Left cardiac atrium (tissue), 4 donors: ENCODE measurements at regions of chr6 and their contacts with region 1.

Region 1: GRCh38 chr6:148947621-148948444 is 201.0 kb downstream of the UST start:
- DNase-seq: peak; percentile 83
- ATAC-seq: peak; percentile 90 to 95

Region 2: DNA sequence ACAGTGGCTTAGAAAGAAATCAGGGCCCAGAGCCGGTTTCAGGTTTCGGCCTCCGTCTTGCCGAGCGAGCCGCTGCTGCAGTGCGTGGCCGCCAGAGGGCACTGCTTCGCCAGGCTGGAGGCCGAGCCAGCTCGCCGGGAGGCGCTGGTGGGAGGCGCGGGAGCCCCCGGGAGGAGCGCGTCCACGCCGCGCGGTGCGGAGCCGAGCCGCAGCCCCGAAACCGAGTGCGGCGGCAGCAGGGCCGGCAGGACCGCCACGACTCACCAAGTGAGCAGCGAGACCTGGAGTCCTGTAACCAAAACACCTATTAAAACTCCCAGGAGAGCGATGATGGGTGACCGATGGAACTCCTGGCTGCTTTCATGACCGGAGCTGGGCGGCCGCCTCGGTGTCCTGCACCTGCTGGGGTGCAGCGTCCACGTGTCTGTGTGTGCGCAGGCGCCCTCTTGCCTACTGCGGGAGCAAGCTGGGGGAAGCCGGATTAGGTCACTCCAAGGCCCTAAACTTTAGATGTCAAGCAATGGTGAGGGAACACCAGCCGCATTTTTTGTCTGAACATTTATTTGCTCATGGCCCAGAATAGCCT is 387.9 kb before region 1 on chr6:
- intact Hi-C with region 1: loop called in 1 of 2 experiments (anchors 5 kb)
- DNase-seq: peak; percentile 80
- ATAC-seq: peak; percentile 89 to 90

Region 3: DNA sequence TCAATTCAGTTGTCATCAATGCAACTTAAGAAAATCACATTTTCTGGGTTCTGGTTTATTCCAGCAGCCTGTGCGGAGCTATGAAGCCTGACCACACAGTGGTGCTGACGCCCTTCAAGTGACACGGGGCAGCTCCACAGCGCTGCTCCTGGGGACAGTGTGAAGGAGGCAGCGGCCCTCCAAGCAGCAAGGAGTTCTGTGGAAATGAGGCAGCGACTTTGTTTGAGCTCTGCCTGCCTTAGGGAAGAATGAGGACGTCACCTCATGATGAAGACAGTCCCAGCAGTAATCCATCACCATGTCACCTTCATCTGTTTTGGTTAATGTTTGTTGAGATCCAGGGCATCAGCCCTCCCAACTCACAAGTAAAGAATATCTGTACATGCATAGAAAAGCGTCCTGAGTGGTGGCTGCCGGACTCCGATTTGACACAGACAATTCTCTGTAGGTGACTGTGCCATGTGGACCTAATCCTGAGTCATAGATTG is 369.5 kb before region 1 on chr6:
- intact Hi-C with region 1: loop called (anchors 2 to 5 kb)
- DNase-seq: peak; percentile 80
- ATAC-seq: peak; percentile 99 to 100

Region 4: DNA sequence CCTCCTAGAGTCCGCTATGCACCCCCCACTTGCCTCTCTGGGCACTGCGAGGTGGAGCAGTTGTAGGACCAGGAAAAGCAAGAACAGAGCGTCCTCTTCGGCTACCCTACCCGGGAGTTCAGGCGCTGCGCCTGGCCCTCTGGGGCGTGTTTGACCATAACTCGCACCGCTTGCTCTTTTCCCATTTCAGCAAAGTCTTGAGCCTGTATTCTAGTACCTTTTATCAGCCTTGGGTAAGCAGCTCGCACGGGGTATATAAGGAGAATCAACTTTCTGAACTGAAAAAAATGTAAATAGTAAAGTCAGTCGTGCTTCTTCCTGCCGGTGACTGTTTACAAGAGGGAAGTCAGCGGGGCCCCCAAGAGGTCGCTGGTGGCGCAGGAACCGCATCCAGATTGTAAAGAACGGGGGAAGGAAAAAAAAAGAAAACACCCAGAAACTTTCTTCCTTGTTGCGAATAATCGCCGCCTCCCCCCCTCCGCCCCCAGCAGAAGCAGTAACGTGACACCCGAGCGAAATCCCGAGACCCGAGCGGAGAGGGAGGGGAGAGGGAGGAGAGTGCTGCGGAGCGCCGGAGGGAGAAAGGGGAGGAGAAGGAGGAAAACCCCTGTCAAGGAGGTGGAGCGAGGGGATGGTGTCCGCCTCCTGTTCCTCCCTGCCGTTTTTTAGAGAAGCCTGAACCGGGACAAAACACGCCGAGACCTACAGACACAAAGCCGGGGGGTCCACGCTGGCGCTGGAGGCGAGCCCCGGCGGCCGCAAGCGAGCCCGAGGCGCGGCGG is 201.3 kb before region 1 on chr6 and contains the start of gene UST:
- intact Hi-C with region 1: loop called (anchors 5 to 10 kb)
- DNase-seq: peak; percentile 78
- ATAC-seq: peak; percentile 83 to 94
- total RNA-seq, gene UST: 3.5 to 6.5 TPM

Region 5: DNA sequence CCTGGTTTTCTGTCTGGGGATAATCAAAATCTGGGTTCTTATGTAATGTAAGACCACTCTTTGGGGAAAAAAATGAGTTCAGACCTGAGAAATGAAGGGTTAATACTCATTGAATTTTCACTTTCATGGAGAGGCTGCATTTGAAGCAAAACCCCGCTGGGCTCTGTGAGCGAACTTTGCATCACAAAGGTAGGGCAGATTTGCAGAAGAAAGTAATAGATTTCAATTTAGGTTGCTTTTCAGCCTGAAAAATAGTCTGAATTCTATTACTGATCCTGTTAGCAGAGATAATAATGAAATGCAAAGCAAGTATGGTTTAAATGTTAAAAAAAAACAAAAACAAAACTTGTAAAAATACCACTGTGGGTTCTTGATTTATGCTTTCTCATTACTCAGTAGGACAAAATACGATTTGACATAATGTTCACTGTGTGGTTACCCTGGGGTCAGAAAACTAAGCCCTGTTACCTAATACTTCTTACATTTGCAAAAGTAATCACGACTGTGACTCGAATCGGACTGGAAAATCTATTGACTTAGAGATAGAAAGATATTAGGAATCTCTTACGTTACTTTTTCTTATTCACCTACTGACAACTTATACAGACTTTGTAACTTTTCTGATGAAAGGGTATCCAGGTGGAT is 128.8 kb before region 1 on chr6:
- intact Hi-C with region 1: no loop called
- DNase-seq: no peak
- ATAC-seq: no peak